Activated T-helper 1 cell treated with anti-CD3 and anti-CD28 coated beads, Interleukin-12 subunit alpha, Interleukin-12 subunit beta, Interleukin-2, Interleukin-4 antibody, amounts not matched to agents 30 ng/mL and 10 ng/mL and 1 ng/mL, durations not matched to agents 14 hours and 24 hours and 36 hours (primary cell): ENCODE measurements at regions of chr4 and their contacts with region 1.

Region 1: GRCh38 chr4:168864821-168865541 is 145.1 kb downstream of the CBR4 start:
- DNase-seq: no peak
- H3K4me3 Mint-ChIP-seq: no peak overlapping the region
- H3K27ac Mint-ChIP-seq: no peak overlapping the region
- H3K4me1 Mint-ChIP-seq: peaks cover 52% of the 10 kb centered on the region
- H3K27me3 Mint-ChIP-seq: no peaks in the 10 kb centered on the region

Region 2: DNA sequence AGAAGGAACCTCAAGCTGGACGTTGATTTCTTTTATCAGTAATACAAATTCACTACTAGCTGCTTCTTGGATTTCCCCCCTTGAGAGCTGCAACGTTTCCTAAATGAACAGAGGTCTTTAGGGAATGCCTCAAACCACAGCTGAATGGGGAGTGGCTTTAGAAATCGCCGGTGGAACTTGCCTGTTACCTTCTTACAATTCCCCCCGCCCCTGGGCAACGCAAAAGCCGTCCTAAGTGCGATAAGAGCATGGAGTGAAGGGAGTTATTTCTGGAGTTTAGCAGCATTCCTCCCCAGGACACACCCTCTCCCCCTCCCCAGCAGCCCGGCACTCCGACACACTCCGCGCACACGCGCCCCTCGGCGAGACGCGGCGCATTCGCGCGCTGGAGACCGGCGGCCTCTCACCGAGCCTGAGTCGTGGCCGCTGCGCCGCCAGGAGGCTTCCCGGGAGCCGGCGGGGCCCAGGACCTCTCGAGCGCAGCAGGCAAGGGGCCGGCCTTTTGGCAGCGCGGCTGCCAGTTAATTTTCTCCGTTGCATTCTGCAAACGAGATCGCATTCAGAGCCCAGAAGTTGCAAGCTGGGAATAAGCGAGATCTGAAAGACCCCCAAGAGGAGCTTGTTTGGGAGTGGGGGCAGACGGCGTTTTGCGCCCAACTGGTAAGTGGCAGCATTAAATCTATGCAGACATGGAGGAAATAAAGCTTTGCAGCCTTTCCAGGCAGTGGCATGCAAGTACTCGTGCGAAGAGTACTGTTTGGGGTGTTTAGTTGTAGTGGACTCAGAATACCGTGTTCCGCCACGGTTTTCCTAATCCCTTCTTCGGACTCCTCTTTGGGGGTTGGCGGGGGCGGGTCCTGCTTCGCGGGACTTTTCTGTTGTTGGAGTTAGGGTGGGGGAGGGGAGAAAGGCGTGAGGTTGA is 233.5 kb before region 1 on chr4:
- intact Hi-C with region 1: no loop called
- DNase-seq: no peak
- H3K4me3 Mint-ChIP-seq: peak overlapping the region; percentile 36
- H3K27ac Mint-ChIP-seq: no peak overlapping the region
- H3K4me1 Mint-ChIP-seq: peaks cover 16% of the 10 kb centered on the region
- H3K27me3 Mint-ChIP-seq: peaks cover 50% of the 10 kb centered on the region

Region 3: GRCh38 chr4:168723020-168723419 is 142.0 kb before region 1 on chr4:
- intact Hi-C with region 1: loop called (anchors 5 kb)
- DNase-seq: no peak
- H3K4me3 Mint-ChIP-seq: peak overlapping the region; percentile 25
- H3K27ac Mint-ChIP-seq: peak overlapping the region; percentile 33
- H3K4me1 Mint-ChIP-seq: peaks cover 23% of the 10 kb centered on the region
- H3K27me3 Mint-ChIP-seq: peaks cover 4% of the 10 kb centered on the region

Region 4: DNA sequence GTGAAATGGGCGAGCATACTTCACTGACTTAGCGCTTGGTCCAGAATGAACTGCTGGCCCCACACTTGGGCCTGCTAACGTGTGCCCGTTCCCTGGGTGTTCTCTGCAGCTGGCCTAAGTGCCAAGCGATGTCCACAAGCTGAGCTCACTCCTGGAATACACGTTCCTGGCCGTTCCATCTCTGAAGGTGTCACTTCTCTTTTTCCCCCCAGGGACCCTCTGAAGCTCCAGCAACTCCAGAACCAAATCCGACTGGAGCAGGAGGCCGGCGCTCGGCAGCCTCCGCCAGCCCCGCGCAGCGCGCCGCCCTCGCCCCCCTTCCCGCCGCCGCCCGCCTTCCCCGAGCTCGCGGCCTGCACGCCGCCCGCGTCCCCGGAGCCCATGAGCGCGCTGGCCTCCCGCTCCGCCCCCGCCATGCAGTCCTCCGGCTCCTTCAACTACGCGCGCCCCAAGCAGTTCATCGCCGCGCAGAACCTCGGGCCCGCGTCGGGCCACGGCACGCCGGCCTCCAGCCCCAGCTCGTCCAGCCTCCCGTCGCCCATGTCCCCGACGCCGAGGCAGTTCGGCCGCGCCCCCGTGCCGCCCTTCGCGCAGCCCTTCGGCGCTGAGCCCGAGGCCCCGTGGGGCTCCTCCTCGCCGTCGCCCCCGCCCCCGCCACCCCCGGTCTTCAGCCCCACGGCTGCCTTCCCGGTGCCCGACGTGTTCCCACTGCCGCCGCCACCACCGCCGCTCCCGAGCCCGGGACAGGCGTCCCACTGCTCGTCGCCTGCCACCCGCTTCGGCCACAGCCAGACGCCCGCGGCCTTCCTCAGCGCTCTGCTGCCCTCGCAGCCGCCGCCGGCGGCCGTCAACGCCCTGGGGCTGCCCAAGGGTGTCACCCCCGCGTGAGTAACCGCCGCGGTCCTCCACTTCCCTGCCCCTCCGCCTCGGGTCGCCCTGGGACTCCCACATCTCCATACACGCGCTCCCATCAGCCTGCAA is 12.8 kb after region 1 on chr4:
- intact Hi-C with region 1: loop called (anchors 1 kb)
- DNase-seq: no peak
- H3K4me3 Mint-ChIP-seq: peak overlapping the region; percentile 84
- H3K27ac Mint-ChIP-seq: peak overlapping the region; percentile 75
- H3K4me1 Mint-ChIP-seq: peaks cover 27% of the 10 kb centered on the region
- H3K27me3 Mint-ChIP-seq: peaks cover 41% of the 10 kb centered on the region

Region 5: GRCh38 chr4:168917138-168917779 is 52.3 kb after region 1 on chr4:
- intact Hi-C with region 1: loop called (anchors 5 kb)
- DNase-seq: no peak
- H3K4me3 Mint-ChIP-seq: no peak overlapping the region
- H3K27ac Mint-ChIP-seq: no peak overlapping the region
- H3K4me1 Mint-ChIP-seq: no peaks in the 10 kb centered on the region
- H3K27me3 Mint-ChIP-seq: peaks cover 2% of the 10 kb centered on the region

Region 6: DNA sequence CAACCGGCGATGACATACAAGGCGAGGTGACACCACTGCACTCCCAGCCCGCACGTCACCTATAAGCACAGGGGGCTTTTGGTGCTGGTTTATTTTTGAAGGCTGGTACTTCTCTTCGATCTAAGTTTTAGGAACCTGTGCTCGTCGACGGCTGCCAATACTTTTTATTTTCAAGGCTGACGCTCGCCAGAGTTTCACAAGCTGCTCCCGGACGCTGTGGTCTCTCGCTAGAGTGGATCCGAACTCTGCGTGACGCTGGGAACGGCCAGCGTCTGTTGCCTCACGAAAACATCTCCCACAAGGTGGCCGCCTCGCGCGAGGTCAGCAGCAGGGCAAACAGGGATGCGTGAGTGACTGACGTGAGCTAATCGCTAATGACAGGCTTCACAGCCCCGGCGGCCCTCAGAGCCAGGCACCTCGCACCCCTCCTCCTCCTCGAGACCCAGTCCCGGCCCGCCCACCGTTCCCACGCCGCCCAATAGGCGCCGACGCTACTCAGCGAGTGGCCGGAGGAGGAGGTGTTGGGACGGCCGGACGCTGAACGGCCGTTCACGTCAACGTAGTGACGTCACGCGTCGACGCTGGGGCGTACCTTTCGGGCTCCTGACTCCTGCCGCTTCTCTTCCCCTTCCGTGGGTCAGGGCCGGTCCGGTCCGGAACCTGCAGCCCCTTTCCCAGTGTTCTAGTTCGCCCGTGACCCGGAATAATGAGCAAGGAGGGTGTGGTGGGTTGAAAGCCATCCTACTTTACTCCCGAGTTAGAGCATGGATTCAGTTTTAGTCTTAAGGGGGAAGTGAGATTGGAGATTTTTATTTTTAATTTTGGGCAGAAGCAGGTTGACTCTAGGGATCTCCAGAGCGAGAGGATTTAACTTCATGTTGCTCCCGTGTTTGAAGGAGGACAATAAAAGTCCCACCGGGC is 755.2 kb after region 1 on chr4 and contains the start of gene CLCN3:
- intact Hi-C with region 1: loop called (anchors 10 kb)
- DNase-seq: peak; percentile 88
- H3K4me3 Mint-ChIP-seq: peak within 1 kb of the TSS; percentile 94
- H3K27ac Mint-ChIP-seq: peak within 1 kb of the TSS; percentile 98
- H3K4me1 Mint-ChIP-seq: peaks cover 67% of the 10 kb centered on the region
- H3K27me3 Mint-ChIP-seq: no peaks in the 10 kb centered on the region
- total RNA-seq, gene CLCN3: 29.4 and 30.2 TPM in 2 replicates